Left colon (tissue), 2 donors: ENCODE measurements at regions of chr9 and their contacts with region 1.

Region 1: DNA sequence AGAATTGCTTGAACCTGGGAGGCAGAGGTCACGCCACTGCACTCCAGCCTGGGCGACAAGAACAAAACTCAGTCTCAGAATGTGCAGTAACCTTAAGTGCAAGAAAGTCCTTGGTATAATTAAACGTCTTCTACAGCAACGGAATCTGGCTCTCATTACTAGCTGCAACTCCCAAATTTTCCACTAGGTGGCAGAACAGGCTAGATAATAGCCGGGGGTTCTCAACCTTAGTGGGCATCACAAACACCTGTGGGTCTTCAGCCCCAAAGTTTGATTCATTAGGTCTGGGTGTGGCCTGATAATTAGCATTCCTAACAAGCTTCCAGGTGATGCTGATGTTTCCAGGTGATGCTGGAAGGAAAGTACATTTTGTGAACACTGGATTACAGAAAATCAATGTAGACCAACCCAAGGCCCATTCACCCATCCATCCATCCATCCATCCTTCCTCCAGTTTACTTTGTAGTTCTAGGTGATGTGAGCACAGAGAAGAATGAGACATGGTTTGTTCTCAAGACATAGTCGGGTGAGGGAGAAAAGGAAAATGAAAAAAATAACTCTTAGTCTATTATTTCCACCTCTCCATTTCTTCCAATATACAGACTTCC is 37.3 kb downstream of the FBXW2 start:
- DNase-seq: peak in 1 of 2 donors; percentile 50
- ATAC-seq: peak; percentile 64

Region 2: GRCh38 chr9:120676767-120677402 is 79.0 kb before region 1 on chr9:
- intact Hi-C with region 1: no loop called
- DNase-seq: no peak
- ATAC-seq: no peak

Region 3: DNA sequence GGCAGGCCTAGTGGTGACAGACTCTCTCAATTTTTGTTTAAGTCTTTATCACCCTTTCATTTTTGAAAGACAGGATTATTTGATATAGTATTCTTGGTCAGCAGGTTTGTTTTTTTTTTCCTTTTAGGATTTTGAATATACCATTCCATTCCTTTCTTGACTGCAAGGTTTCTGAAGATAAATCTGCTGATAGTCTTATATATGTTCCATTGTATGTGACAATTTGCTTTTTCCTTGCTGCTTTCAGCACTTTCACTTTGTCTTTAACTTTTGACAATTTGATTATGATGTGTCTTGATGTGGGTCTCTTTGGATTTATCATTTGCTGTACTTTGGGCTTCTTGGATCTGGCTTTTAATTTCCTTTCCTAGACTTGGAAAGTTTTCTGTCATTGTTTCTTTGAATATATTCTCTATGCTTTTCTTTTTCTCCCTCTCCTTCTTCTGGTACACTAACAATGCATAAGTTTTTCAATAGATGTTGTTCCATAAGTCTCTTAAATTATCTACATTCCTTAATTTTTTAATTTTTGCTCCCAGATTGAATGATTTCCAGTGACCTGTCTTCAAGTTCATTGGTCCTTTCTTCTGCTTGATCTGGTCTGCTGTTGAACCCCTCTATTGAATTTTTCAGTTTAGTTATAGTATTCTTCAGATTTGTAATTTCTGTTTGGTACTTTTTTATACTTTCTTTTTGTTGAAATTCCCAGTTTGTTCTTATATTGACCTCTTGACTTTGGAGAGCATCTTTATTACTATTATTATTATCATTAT is 51.9 kb after region 1 on chr9:
- intact Hi-C with region 1: no loop called
- DNase-seq: no peak
- ATAC-seq: no peak

Region 4: DNA sequence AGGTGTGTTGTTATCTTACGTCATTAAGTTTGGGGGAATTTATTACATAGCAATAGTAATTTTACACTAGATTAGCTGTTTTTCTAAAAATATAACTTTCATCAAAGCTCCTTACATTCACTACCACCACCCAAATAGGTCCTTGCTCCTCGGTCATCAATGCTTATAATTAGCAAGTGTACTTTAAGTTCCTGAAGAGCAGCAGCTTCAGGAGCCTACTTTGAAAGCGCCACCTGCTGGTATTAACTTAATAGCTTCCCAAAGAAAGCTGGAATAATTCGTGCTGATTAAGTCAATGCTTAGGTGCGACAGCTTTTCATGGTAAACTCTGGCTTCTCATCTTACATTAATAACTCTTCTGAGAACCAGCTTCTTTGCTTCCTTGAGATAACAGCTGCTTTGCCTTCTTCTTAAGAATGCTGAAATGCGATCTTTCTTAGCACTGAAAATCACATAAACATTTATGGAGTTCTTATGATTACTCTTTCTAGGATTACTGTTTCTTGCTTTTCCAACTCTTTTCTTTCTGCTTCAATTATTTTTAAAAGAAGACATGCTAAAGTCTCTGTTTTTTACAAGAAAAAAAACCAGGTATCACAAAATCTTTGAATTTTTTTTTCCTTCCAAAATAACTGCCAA is 304.2 kb after region 1 on chr9:
- intact Hi-C with region 1: loop called in 1 of 2 experiments (anchors 10 kb)
- DNase-seq: no peak
- ATAC-seq: no peak